ENCODE measurements at regions of chr13 and their contacts with region 1.

Region 1: GRCh38 chr13:89982407-89983095 is 1364.9 kb upstream of the MIR17HG start:
- DNase-seq: no peak

Region 2: GRCh38 chr13:89916551-89916950 is 66.0 kb before region 1 on chr13:
- intact Hi-C with region 1: no loop called
- DNase-seq: no peak

Region 3: GRCh38 chr13:89965252-89965651 is 17.3 kb before region 1 on chr13:
- intact Hi-C with region 1: loop called in 1 of 2 experiments (anchors 1 kb)
- DNase-seq: no peak

Measured in posterior vena cava (tissue), 2 donors.